Naive thymus-derived CD4-positive, alpha-beta T cell (primary cell): ENCODE measurements at regions of chr5 and their contacts with region 1.

Region 1: DNA sequence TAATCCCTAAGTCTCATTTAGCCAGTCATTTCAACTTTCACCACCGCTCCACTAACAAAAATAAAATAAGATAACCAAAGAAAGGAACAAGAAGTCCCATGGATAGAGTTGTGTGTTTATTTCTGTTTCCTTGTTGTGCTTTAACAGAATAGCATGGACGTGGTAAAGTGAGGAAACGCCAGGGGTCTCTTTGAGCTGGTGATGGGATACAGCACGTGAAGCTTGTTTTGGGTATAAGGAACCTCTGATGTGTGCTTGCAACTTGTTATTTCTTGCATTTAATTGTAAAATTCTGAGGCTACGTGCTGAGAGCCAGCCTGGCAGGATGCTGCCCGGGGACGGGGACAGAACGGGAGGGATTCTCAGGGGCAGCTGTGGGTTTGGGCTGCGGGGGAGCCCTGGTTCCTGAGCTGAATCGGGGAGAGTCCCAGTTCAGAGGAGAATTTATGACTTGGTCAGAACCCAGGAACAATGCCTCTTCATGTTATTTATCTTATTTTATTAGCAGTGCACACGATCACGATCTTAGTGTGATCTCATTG is 63.4 kb downstream of the ANKRD33B start:
- DNase-seq: peak in 1 of 9 donors; percentile 8
- ATAC-seq: peak; percentile 1
- H3K4me3 ChIP-seq: peak overlapping the region; percentile 59
- H3K4me3 Mint-ChIP-seq: peak overlapping the region; percentile 78 to 95 (median 86)
- H3K27ac ChIP-seq: no peak overlapping the region
- H3K27ac Mint-ChIP-seq: peak overlapping the region; percentile 8 to 72 (median 49)
- H3K4me1 ChIP-seq: peaks cover 0 to 8% of the 10 kb centered on the region in 2 donors
- H3K4me1 Mint-ChIP-seq: peaks cover 13 to 43% (median 17%) of the 10 kb centered on the region in 7 donors
- H3K27me3 ChIP-seq: no peaks in the 10 kb centered on the region
- H3K27me3 Mint-ChIP-seq: peaks cover 0 to 7% (median 0%) of the 10 kb centered on the region in 5 donors

Region 2: GRCh38 chr5:10249948-10250803 is 377.1 kb before region 1 on chr5 and contains the start of gene CCT5:
- CTCF ChIA-PET with region 1: no interaction called
- POLR2A ChIA-PET with region 1: no interaction called
- intact Hi-C with region 1: loop called in 1 of 2 experiments (anchors 10 kb)
- DNase-seq: peak; percentile 83 to 97 (median 95)
- ATAC-seq: peak; percentile 91
- H3K4me3 ChIP-seq: peak within 1 kb of the TSS; percentile 97
- H3K4me3 Mint-ChIP-seq: peak within 1 kb of the TSS; percentile 83 to 99 (median 95)
- H3K27ac ChIP-seq: peak within 1 kb of the TSS; percentile 89
- H3K27ac Mint-ChIP-seq: peak within 1 kb of the TSS; percentile 96 to 100 (median 99)
- H3K4me1 ChIP-seq: peaks cover 12 to 32% of the 10 kb centered on the region in 2 donors
- H3K4me1 Mint-ChIP-seq: peaks cover 47 to 66% (median 53%) of the 10 kb centered on the region in 7 donors
- H3K27me3 ChIP-seq: no peaks in the 10 kb centered on the region
- H3K27me3 Mint-ChIP-seq: peaks cover 0 to 5% (median 0%) of the 10 kb centered on the region in 5 donors
- total RNA-seq, gene CCT5: 58.0 to 265 (median 81.9) TPM

Region 3: DNA sequence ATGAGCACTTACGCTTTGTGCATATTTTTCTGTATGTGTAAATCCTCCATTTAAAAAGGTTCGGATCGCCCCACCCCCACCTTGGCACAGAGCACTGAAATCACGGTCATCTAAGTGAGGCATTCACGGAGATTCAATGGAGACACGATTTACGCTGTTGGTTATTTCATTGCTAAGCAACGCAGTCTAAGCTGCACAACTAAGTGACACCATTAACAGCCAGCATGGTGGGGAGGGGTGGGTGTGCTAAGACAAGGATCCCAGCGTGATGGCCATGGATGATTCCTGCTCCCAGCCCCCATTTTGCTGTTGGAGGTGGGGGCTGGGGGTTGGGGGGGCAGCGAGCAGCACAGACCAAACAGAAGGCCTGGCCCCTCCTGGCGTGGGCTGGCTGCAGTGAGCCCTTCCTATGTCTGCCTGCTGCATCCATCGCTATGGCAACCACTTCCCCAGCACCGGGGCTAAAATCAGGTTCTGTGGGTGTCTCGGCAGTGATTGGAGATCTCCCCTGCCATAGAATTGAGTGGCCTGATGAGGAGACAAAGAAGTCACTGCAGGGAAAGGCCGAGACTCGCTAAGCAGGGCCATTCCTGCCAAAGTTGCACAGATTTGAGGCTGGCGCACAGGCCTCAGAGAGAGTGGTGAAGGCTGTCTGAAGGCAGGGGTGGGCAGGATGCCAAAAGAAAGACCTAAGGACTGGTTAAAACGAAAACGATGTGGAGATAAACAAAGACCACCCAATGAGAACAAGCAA is 288.0 kb before region 1 on chr5:
- CTCF ChIA-PET with region 1: no interaction called
- POLR2A ChIA-PET with region 1: no interaction called
- intact Hi-C with region 1: no loop called
- DNase-seq: no peak
- ATAC-seq: no peak
- H3K4me3 ChIP-seq: no peak overlapping the region
- H3K4me3 Mint-ChIP-seq: no peak overlapping the region
- H3K27ac ChIP-seq: no peak overlapping the region
- H3K27ac Mint-ChIP-seq: peak overlapping the region in 1 of 9 donors; percentile 30
- H3K4me1 ChIP-seq: no peaks in the 10 kb centered on the region
- H3K4me1 Mint-ChIP-seq: peaks cover 0 to 4% (median 0%) of the 10 kb centered on the region in 7 donors
- H3K27me3 ChIP-seq: peaks cover 0 to 5% of the 10 kb centered on the region in 2 donors
- H3K27me3 Mint-ChIP-seq: peaks cover 11 to 19% (median 14%) of the 10 kb centered on the region in 5 donors

Region 4: GRCh38 chr5:10424124-10424731 is 203.0 kb before region 1 on chr5:
- CTCF ChIA-PET with region 1: interaction called, 14 read pairs
- POLR2A ChIA-PET with region 1: no interaction called
- intact Hi-C with region 1: no loop called
- DNase-seq: peak in 3 of 9 donors; percentile 19 to 29 (median 22)
- ATAC-seq: peak; percentile 60
- H3K4me3 ChIP-seq: no peak overlapping the region
- H3K4me3 Mint-ChIP-seq: no peak overlapping the region
- H3K27ac ChIP-seq: no peak overlapping the region
- H3K27ac Mint-ChIP-seq: peak overlapping the region in 4 of 9 donors; percentile 15 to 46 (median 24)
- H3K4me1 ChIP-seq: peaks cover 0 to 21% of the 10 kb centered on the region in 2 donors
- H3K4me1 Mint-ChIP-seq: peaks cover 11 to 53% (median 35%) of the 10 kb centered on the region in 7 donors
- H3K27me3 ChIP-seq: no peaks in the 10 kb centered on the region
- H3K27me3 Mint-ChIP-seq: no peaks in the 10 kb centered on the region